ENCODE measurements at regions of chr5 and their contacts with region 1.

Region 1: DNA sequence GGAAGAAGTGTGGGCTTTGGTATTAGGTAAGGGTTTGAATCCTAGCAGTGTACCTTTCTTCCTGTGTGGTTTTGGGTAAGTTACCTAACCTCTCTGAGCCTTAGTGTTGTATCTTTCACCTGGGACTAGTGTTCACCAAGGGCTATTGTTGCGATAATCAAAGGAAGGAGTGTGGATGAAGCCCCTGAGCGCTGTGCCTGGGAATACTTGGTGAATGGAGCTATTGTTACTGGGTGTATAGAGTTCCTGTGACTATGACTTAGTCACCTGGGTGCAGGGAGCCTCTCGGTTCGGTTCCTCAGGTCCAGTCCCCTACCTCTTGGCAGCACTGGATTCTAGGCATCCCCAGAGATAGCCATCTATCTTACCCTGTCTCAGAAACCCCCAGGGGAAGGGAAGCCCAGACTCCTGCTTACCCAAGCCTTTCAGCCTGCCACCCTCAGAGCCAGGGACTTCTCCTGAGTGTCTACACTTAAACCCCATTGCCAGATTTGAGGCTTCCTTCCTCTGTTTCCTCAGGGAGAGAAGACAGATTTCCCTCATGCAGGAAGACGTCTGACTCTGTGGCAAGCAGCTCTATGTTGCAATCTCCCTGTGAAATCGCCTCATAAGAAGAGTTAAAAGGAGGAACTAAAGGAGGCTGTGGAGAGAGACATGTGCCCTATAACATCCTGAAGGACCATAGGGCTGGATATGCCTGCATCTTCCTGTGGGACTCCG is 181.0 kb upstream of the PITX1 start:
- DNase-seq: peak; percentile 47 to 66
- H3K4me3 ChIP-seq: no peak overlapping the region
- H3K27ac ChIP-seq: no peak overlapping the region
- H3K4me1 ChIP-seq: peaks cover 0 to 31% (median 24%) of the 10 kb centered on the region in 4 donors
- H3K27me3 ChIP-seq: no peaks in the 10 kb centered on the region
- CTCF ChIP-seq: no peak

Region 2: DNA sequence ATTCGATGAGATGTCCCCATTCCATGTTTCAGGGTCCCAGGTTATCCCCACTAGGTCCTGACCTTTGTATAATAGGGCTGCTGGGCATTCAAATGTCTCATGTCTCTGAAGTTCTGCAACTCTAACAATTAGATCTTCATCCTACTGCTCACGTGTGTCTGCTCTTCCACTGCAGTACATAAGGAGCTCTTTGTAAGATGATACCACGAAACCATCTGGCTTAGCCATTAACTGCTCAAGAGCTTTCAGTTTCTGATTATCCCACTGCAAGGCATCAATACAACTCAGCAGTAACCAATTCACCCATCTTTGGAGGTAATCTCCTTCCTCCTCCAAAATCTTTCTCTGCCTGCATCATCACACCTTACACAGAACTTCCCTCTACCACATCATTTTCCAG is 939.2 kb before region 1 on chr5:
- intact Hi-C with region 1: no loop called
- DNase-seq: no peak
- H3K4me3 ChIP-seq: no peak overlapping the region
- H3K27ac ChIP-seq: no peak overlapping the region
- H3K4me1 ChIP-seq: no peaks in the 10 kb centered on the region
- H3K27me3 ChIP-seq: no peaks in the 10 kb centered on the region
- CTCF ChIP-seq: no peak

Region 3: GRCh38 chr5:135139381-135140137 is 75.5 kb before region 1 on chr5:
- intact Hi-C with region 1: no loop called
- DNase-seq: peak in 1 of 2 donors; percentile 45
- H3K4me3 ChIP-seq: no peak overlapping the region
- H3K27ac ChIP-seq: no peak overlapping the region
- H3K4me1 ChIP-seq: no peaks in the 10 kb centered on the region
- H3K27me3 ChIP-seq: no peaks in the 10 kb centered on the region
- CTCF ChIP-seq: no peak

Region 4: DNA sequence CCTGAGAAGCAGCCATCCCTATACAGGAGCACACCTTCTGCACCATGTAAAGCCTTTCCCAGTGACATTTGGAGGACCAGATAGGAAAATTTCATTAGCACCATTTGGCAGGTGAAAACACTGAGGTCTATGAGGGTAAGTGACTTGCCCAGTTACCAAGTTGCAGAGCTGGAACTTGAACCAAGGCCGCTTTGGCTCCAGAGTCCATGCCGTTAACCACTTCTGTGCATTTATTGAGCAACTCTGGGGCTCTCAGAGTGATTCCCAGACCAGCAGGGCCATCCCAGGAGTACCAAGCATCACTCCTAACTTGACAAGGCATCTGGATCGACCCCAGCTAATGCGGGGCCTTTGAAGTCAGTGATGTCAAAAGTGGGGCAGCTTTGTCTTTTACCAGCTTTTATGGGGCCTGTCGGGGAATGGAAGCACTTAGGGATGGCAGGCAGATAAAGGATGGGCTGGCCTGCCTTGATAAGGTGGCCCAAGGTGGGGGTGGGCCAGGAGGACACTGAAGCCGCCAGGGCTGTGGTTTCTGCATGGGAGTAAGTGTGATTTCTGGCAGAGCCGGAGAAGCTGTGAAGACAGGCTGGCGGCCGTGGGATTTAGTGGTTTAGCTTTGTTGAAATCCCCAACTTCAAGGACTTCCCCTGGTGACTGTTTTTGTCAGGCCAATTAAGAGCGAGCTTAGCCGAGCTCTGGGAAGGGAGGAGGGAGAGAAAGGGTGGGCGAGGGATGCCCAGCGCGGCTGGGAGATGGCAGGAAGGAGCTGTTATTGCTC is 56.7 kb after region 1 on chr5:
- intact Hi-C with region 1: loop called (anchors 10 kb)
- DNase-seq: peak in 1 of 2 donors; percentile 28
- H3K4me3 ChIP-seq: no peak overlapping the region
- H3K27ac ChIP-seq: no peak overlapping the region
- H3K4me1 ChIP-seq: peaks cover 0 to 32% (median 15%) of the 10 kb centered on the region in 4 donors
- H3K27me3 ChIP-seq: no peaks in the 10 kb centered on the region
- CTCF ChIP-seq: no peak